ENCODE measurements at regions of chr2 and their contacts with region 1.

Region 1: GRCh38 chr2:183038341-183039300 is at the start of gene NCKAP1:
- DNase-seq: peak; percentile 91 to 95
- ATAC-seq: peak; percentile 92 to 96 (median 94)
- H3K4me3 ChIP-seq: peak within 1 kb of the TSS; percentile 69 to 88 (median 83)
- H3K27ac ChIP-seq: peak within 1 kb of the TSS; percentile 95 to 100 (median 99)
- H3K4me1 ChIP-seq: peaks cover 0 to 49% (median 37%) of the 10 kb centered on the region in 9 donors
- H3K27me3 ChIP-seq: peaks cover 0 to 93% (median 0%) of the 10 kb centered on the region in 7 donors
- CTCF ChIP-seq: peak; percentile 81 to 99 (median 93)
- total RNA-seq, gene NCKAP1: 118 to 153 (median 130) TPM

Region 2: DNA sequence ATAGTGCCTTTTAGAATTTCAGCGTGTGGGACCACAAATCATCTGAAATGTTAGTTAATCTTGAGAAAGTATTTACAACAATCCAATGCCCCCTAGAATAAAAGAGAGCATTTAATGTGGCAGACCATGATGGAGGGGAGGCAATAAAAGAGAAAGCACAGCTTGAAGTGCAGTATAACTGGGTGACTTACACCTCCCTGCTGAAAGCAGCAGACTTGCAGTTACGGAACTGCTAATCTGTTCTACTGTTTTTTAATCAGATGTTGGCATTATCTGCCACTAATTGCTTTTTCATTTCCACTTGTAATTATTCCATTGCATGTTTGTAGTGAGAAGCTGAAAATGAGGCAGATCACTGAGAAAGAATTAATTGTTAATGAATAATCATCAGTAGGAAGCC is 1712.0 kb before region 1 on chr2:
- intact Hi-C with region 1: no loop called
- DNase-seq: no peak
- ATAC-seq: no peak
- H3K4me3 ChIP-seq: no peak overlapping the region
- H3K27ac ChIP-seq: no peak overlapping the region
- H3K4me1 ChIP-seq: no peaks in the 10 kb centered on the region
- H3K27me3 ChIP-seq: no peaks in the 10 kb centered on the region
- CTCF ChIP-seq: no peak

Region 3: DNA sequence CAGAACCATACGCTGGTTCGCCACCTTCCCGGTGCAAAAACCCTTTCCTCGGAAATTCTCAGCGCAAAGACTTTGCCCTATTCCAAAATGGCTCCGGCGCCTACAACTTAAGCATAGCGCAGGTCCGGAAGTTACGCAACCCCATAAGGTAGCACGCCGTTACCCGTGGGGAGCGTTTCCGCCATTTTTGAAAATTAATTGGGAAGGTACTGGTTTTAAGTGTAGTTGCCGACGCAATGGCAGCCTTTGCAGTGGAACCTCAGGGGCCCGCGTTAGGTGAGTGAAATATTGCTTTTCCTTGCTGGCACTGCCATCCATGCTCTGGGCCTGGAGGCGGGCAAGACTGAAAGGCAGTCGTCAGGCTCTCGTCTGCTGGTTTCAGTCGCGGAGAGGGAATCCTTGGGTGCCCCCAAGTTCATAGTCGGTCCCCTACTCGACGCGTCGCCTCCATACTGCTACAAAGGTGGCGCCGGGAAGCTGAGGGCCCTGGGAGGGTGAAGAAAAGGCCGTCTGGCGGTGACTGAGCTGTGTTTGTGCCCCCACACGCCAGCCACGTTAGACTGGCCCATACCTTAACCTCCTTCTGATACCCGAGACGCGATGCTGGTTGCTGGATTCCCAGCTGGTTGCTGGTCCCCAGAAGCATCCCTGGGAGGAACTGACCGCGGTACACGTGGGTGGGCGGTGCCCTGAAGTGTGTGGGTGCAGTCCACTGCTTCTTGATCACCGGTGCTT is 85.8 kb after region 1 on chr2 and contains the start of gene NUP35:
- intact Hi-C with region 1: loop called in 1 of 10 experiments (anchors 1 kb)
- DNase-seq: peak; percentile 79 to 88
- ATAC-seq: peak; percentile 98 to 99 (median 99)
- H3K4me3 ChIP-seq: peak within 1 kb of the TSS; percentile 52 to 96 (median 80)
- H3K27ac ChIP-seq: peak within 1 kb of the TSS; percentile 7 to 88 (median 80)
- H3K4me1 ChIP-seq: peaks cover 0 to 23% (median 14%) of the 10 kb centered on the region in 9 donors
- H3K27me3 ChIP-seq: no peaks in the 10 kb centered on the region
- CTCF ChIP-seq: no peak
- total RNA-seq, gene NUP35: 4.4 to 11.0 (median 8.3) TPM

Measured in heart right ventricle (tissue), 16 donors.